Activated CD4-positive, alpha-beta T cell treated with anti-CD3 and anti-CD28 coated beads for 36 hours (primary cell): ENCODE measurements at regions of chr3 and their contacts with region 1.

Region 1: GRCh38 chr3:18649666-18650363 is 224.7 kb upstream of the SATB1 start:
- DNase-seq: peak; percentile 80
- ATAC-seq: peak; percentile 79
- H3K4me3 Mint-ChIP-seq: peak overlapping the region; percentile 34
- H3K27ac Mint-ChIP-seq: peak overlapping the region; percentile 98
- H3K4me1 Mint-ChIP-seq: peaks cover 84% of the 10 kb centered on the region
- H3K27me3 Mint-ChIP-seq: no peaks in the 10 kb centered on the region

Region 2: GRCh38 chr3:17742108-17742879 is 907.5 kb before region 1 on chr3 and contains the start of gene TBC1D5:
- CTCF ChIA-PET with region 1: no interaction called
- POLR2A ChIA-PET with region 1: no interaction called
- intact Hi-C with region 1: loop called in 1 of 2 experiments (anchors 10 kb)
- DNase-seq: peak; percentile 97
- ATAC-seq: peak; percentile 97
- H3K4me3 Mint-ChIP-seq: peak within 1 kb of the TSS; percentile 93
- H3K27ac Mint-ChIP-seq: peak within 1 kb of the TSS; percentile 93
- H3K4me1 Mint-ChIP-seq: peaks cover 40% of the 10 kb centered on the region
- H3K27me3 Mint-ChIP-seq: no peaks in the 10 kb centered on the region
- total RNA-seq, gene TBC1D5: 53.9 to 56.9 TPM

Region 3: GRCh38 chr3:18438586-18438985 is 211.2 kb before region 1 on chr3:
- CTCF ChIA-PET with region 1: no interaction called
- POLR2A ChIA-PET with region 1: interaction called, 10 read pairs
- intact Hi-C with region 1: loop called in 1 of 2 experiments (anchors 2 kb)
- DNase-seq: peak; percentile 84
- ATAC-seq: peak; percentile 81
- H3K4me3 Mint-ChIP-seq: peak overlapping the region; percentile 79
- H3K27ac Mint-ChIP-seq: peak overlapping the region; percentile 96
- H3K4me1 Mint-ChIP-seq: peaks cover 14% of the 10 kb centered on the region
- H3K27me3 Mint-ChIP-seq: no peaks in the 10 kb centered on the region

Region 4: DNA sequence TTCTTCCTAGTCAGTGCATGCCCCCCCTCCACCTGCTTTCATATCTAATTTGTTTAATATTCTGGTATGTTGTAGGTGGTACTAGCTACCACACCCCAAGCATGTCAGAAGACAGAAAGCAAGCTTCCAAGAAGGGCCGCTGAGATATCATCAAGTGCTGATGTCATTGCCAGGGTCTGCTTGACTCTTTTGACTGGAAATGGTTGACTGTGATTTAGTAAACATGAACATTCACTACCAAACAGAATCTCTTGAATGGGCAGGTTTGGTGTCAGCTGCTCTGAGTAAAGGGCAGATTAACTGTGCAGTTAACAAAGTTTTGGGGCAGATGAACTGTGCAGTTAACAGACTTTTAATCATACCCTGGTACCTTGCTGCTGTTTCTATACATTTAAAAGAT is 19.6 kb after region 1 on chr3:
- CTCF ChIA-PET with region 1: interaction called, 5 read pairs
- POLR2A ChIA-PET with region 1: interaction called, 15 read pairs
- intact Hi-C with region 1: no loop called
- DNase-seq: peak; percentile 61
- ATAC-seq: peak; percentile 77
- H3K4me3 Mint-ChIP-seq: no peak overlapping the region
- H3K27ac Mint-ChIP-seq: peak overlapping the region; percentile 82
- H3K4me1 Mint-ChIP-seq: peaks cover 60% of the 10 kb centered on the region
- H3K27me3 Mint-ChIP-seq: no peaks in the 10 kb centered on the region

Region 5: DNA sequence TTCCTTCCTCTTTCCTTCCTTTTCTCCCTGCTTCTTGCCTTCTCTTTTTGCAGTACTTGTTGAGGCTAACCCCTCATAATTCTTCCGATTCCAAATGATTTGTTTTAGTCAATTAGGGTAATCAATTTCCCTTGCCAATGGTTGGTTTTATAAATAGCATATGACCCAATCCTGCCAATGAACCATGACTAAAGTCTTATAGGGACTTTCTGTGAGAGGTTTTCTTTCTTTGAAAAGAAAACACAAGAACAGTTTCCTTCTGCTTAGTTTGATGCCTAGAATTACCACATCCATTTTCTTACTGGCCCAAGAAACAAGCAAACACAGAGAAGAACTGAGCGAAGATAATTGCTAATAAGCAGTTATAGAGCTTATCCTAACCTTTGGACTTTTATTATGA is 67.8 kb after region 1 on chr3:
- CTCF ChIA-PET with region 1: interaction called, 6 read pairs
- POLR2A ChIA-PET with region 1: interaction called, 15 read pairs
- intact Hi-C with region 1: loop called (anchors 1 to 2 kb)
- DNase-seq: no peak
- ATAC-seq: peak; percentile 38
- H3K4me3 Mint-ChIP-seq: peak overlapping the region; percentile 8
- H3K27ac Mint-ChIP-seq: peak overlapping the region; percentile 97
- H3K4me1 Mint-ChIP-seq: peaks cover 71% of the 10 kb centered on the region
- H3K27me3 Mint-ChIP-seq: no peaks in the 10 kb centered on the region

Region 6: DNA sequence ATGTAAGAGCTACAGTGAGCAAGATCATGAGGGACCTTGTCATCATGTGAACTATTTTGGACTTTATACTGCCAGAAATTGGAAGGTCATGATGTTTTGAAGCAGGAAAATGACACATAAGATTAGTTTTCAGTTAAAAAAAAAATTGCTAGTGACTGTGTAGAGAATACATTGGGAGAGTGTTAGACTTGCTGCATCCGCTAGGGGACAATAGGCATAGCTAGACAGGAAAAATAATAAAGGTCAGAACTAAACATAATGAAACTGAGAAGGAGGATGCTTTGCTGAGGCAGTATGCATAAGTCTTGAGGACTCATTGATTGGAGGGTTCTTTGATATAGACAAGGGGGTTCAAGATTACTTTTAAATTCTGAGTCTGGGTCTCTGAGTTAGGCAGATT is 222.7 kb after region 1 on chr3:
- CTCF ChIA-PET with region 1: no interaction called
- POLR2A ChIA-PET with region 1: no interaction called
- intact Hi-C with region 1: loop called in 1 of 2 experiments (anchors 1 kb)
- DNase-seq: no peak
- ATAC-seq: peak; percentile 43
- H3K4me3 Mint-ChIP-seq: no peak overlapping the region
- H3K27ac Mint-ChIP-seq: peak overlapping the region; percentile 20
- H3K4me1 Mint-ChIP-seq: peaks cover 67% of the 10 kb centered on the region
- H3K27me3 Mint-ChIP-seq: peaks cover 2% of the 10 kb centered on the region

Region 7: GRCh38 chr3:19190602-19191001 is 540.8 kb after region 1 on chr3:
- CTCF ChIA-PET with region 1: no interaction called
- POLR2A ChIA-PET with region 1: no interaction called
- intact Hi-C with region 1: no loop called
- DNase-seq: no peak
- ATAC-seq: peak; percentile 74
- H3K4me3 Mint-ChIP-seq: no peak overlapping the region
- H3K27ac Mint-ChIP-seq: no peak overlapping the region
- H3K4me1 Mint-ChIP-seq: peaks cover 3% of the 10 kb centered on the region
- H3K27me3 Mint-ChIP-seq: peaks cover 2% of the 10 kb centered on the region